Ovary (tissue), 10 donors: ENCODE measurements at regions of chr3 and their contacts with region 1.

Region 1: GRCh38 chr3:115169808-115170207 is 22.7 kb upstream of the ZBTB20 start:
- DNase-seq: no peak
- H3K4me3 ChIP-seq: no peak overlapping the region
- H3K27ac ChIP-seq: no peak overlapping the region
- H3K4me1 ChIP-seq: no peaks in the 10 kb centered on the region
- H3K27me3 ChIP-seq: no peaks in the 10 kb centered on the region
- CTCF ChIP-seq: peak in 1 of 3 donors; percentile 12
- EP300 ChIP-seq: no peak
- POLR2A ChIP-seq: no peak

Region 2: GRCh38 chr3:113754494-113755159 is 1415.2 kb before region 1 on chr3:
- intact Hi-C with region 1: loop called in 1 of 4 experiments (anchors 5 kb)
- DNase-seq: no peak
- H3K4me3 ChIP-seq: no peak overlapping the region
- H3K27ac ChIP-seq: no peak overlapping the region
- H3K4me1 ChIP-seq: no peaks in the 10 kb centered on the region
- H3K27me3 ChIP-seq: no peaks in the 10 kb centered on the region
- CTCF ChIP-seq: no peak
- EP300 ChIP-seq: no peak
- POLR2A ChIP-seq: no peak

Region 3: GRCh38 chr3:114152519-114153151 is 1017.2 kb before region 1 on chr3:
- intact Hi-C with region 1: loop called in 1 of 4 experiments (anchors 10 kb)
- DNase-seq: peak; percentile 77 to 93 (median 87)
- H3K4me3 ChIP-seq: peak overlapping the region; percentile 46
- H3K27ac ChIP-seq: no peak overlapping the region
- H3K4me1 ChIP-seq: no peaks in the 10 kb centered on the region
- H3K27me3 ChIP-seq: no peaks in the 10 kb centered on the region
- CTCF ChIP-seq: peak; percentile 72 to 92 (median 79)
- EP300 ChIP-seq: no peak
- POLR2A ChIP-seq: no peak

Region 4: DNA sequence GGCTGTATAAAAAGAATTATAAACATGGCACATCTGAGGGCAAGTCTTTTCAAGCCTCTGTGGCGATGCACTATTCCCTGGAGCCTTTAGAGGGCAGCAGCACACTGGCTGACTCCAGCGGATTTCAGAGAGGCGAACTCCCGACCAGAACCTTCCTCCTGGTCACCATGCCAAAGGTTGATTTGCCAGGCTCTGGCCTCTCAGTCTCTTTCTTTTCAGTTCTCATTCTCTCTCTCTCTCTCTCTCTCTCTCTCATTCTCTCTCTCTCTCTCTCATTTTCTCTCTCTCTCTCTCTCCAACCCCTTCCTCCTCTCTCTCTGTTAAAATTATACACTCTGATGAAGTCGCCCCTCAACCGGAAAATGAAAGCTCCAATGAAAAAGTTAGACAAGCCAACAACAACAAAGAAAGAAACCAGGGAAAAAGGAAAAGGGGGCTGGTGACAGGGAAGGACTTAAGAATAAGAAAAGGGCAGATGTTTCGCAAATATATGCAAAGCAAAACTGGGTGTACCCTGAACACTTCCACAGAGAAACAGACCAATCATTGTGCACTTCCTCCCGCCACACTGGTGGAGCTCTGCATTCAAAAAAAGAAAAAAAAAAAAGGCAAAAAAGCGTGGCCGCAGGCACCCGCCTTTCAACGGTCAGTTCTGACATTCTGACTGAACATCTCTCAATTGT is 785.8 kb before region 1 on chr3:
- intact Hi-C with region 1: loop called in 1 of 4 experiments (anchors 10 kb)
- DNase-seq: peak; percentile 82 to 87 (median 87)
- H3K4me3 ChIP-seq: peak overlapping the region; percentile 42
- H3K27ac ChIP-seq: peak overlapping the region; percentile 42 to 63
- H3K4me1 ChIP-seq: peaks cover 7% of the 10 kb centered on the region
- H3K27me3 ChIP-seq: no peaks in the 10 kb centered on the region
- CTCF ChIP-seq: peak; percentile 84 to 91 (median 90)
- EP300 ChIP-seq: no peak
- POLR2A ChIP-seq: no peak

Region 5: DNA sequence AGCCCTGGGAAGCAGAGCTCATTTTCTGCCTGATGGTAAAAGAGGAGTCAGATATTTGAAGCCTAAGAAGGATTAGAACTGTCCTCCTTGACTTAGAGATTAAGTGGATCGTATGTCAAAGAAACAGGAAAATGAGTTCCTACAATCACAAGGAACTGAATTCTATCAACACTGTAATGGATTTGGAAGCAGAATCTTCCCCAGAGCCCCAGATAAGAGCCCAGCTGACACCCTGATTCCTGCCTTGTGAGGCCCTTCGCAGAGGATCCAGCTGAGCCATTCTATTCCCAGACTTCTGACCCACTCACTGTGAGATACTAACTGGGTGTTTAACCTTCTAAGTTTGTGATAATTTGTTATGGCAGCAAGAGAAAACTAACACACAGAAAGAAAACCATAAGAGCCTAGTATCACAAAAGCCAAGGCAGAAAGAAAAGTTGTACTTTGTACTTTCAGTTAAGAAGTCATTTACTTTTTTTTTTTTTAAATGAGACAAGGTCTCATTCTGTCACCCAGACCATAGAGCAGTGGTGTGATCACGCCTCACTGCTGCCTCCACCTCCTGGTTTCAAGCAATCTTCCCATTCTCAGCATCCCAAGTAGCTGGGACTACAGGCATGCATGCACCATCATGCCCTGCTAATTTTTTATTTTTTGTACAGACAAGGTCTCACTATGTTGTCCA is 38.4 kb after region 1 on chr3:
- intact Hi-C with region 1: no loop called
- DNase-seq: no peak
- H3K4me3 ChIP-seq: no peak overlapping the region
- H3K27ac ChIP-seq: no peak overlapping the region
- H3K4me1 ChIP-seq: no peaks in the 10 kb centered on the region
- H3K27me3 ChIP-seq: no peaks in the 10 kb centered on the region
- CTCF ChIP-seq: no peak
- EP300 ChIP-seq: no peak
- POLR2A ChIP-seq: no peak

Region 6: GRCh38 chr3:115469649-115470048 is 299.8 kb after region 1 on chr3:
- intact Hi-C with region 1: no loop called
- DNase-seq: no peak
- H3K4me3 ChIP-seq: no peak overlapping the region
- H3K27ac ChIP-seq: no peak overlapping the region
- H3K4me1 ChIP-seq: no peaks in the 10 kb centered on the region
- H3K27me3 ChIP-seq: no peaks in the 10 kb centered on the region
- CTCF ChIP-seq: no peak
- EP300 ChIP-seq: no peak
- POLR2A ChIP-seq: no peak